ENCODE measurements at regions of chr15 and their contacts with region 1.

Region 1: DNA sequence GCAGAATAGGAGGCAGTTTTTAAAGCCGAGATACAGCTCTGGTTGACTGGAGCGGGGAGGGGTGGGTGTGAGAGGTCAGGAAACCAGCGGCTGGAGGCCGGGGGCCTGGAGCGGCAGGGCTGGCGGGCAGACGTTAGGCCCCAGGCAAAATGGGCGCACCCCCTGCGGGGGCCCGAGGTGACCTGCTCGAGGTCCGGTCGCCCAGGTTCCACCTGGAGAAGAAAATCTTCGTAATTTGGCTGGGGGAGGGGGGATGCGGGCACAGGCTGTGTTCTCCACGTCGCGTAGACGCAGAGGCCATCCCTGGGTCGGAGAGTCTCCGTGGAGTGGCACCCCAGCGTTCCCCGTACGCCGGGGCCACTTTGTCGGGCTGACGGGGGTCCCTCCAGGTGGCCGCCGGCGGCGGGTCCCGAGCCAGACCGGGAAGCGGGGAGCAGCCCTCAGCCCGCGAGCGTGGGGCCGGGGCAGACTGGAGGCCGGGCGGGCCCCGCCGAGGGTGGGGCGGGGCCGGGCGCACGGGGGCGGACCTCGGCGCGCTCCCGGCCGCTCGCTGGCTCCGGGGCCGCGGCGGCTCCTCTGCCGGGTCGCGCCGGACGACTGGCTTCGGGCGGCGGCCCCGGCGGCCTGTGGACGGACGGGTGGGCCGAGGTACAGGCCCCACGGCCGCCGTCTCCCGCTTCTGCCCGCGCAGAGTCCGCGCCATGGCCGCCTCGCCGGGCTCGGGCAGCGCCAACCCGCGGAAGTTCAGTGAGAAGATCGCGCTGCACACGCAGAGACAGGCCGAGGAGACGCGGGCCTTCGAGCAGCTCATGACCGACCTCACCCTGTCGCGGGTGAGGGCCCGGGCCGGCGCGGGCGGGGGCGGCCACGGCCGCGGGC is at the start of gene CRTC3:
- DNase-seq: peak; percentile 82
- ATAC-seq: peak; percentile 84
- H3K4me3 Mint-ChIP-seq: peak within 1 kb of the TSS; percentile 96
- H3K27ac Mint-ChIP-seq: peak within 1 kb of the TSS; percentile 88
- H3K4me1 Mint-ChIP-seq: peaks cover 32% of the 10 kb centered on the region
- H3K27me3 Mint-ChIP-seq: no peaks in the 10 kb centered on the region
- total RNA-seq, gene CRTC3: 70.5 to 74.1 TPM

Region 2: DNA sequence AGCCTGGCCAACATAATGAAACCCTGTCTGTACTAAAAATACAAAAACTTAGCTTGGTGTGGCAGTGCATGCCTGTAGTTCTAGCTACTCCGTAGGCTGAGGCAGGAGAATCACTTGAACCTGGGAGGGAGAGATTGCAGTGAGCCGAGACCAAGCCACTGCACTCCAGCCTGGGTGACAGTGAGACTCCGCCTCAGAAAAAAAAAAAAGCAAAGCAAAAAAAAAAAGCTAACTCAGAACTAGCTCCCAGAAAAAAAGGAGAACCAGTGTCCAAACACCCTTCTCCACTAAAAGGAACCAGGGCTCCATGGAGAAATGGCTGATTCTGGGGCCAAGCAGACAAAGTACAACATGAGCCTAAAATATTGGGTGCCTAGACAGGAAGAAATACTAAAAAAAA is 16.6 kb before region 1 on chr15:
- POLR2A ChIA-PET with region 1: interaction called, 11 read pairs
- DNase-seq: no peak
- ATAC-seq: no peak
- H3K4me3 Mint-ChIP-seq: no peak overlapping the region
- H3K27ac Mint-ChIP-seq: no peak overlapping the region
- H3K4me1 Mint-ChIP-seq: peaks cover 11% of the 10 kb centered on the region
- H3K27me3 Mint-ChIP-seq: no peaks in the 10 kb centered on the region

Region 3: DNA sequence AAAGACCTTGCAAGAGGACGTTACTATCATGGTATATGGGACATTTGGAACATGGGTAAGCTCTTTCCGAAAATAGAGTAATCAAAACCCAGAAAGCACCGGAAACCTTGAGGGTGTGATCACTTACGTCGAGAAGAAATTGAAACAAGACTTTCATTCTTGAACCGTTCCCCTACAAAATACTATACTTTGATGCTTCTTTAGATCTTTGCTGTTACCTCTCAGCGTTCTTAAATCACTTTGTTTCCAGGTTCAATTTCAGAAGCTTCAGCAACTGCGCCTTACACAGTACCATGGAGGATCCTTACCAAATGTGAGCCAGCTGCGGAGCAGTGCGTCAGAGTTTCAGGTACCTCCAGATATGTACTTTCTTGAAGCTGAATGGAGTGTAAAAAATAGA is 10.2 kb after region 1 on chr15:
- POLR2A ChIA-PET with region 1: interaction called, 33 read pairs
- DNase-seq: no peak
- ATAC-seq: peak; percentile 76
- H3K4me3 Mint-ChIP-seq: peak overlapping the region; percentile 88
- H3K27ac Mint-ChIP-seq: peak overlapping the region; percentile 96
- H3K4me1 Mint-ChIP-seq: peaks cover 45% of the 10 kb centered on the region
- H3K27me3 Mint-ChIP-seq: no peaks in the 10 kb centered on the region